ENCODE measurements at regions of chr4 and their contacts with region 1.

Region 1: DNA sequence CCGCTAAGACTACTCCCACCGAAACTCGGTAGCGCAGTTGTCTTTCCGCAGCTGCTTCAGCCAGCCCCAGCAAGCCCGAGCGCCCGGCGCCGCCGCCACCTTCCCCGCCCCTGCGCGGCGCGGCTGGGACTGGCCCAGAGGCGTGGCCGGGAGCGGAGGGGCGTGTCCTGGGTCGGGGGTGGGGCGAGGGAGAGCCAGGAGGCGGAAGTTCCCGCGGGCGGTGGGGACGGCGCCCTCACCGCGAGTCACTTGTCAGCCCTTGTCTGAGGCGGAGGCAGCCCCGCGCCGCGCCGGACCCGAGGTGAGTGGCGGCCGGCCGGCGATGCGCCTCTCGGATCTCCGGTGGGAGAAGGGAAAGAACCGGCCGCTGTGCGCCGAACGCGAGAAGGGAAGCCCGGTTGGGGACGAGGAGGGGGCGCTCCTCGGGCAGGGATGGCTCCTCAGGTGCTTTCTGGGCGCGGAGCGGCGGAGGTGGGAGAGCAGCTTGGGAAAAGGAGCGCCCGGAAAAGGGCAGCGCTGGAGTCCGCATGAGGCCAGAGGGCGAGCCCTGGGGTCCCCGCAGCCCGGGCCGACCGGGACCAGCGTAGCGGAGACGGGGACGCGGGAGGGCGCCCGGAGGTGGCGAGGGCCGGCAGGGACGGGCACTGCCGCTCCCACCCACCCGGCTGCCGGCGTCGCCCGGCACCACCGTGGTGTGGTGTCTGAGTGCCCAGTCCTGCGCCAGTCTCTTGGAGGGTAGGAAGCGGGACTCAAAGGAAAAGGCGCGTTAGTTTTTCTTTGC is at the start of gene PDLIM5:
- DNase-seq: peak; percentile 89 to 91 (median 90)
- H3K4me3 ChIP-seq: peak within 1 kb of the TSS; percentile 92
- H3K27ac ChIP-seq: peak within 1 kb of the TSS; percentile 92 to 95
- H3K4me1 ChIP-seq: no peaks in the 10 kb centered on the region
- H3K27me3 ChIP-seq: no peaks in the 10 kb centered on the region
- CTCF ChIP-seq: peak in 2 of 3 donors; percentile 10 to 16
- EP300 ChIP-seq: no peak
- POLR2A ChIP-seq: peak; percentile 95
- total RNA-seq, gene PDLIM5: 67.2 to 160 (median 87.8) TPM

Region 2: GRCh38 chr4:94399721-94400120 is 52.2 kb before region 1 on chr4:
- intact Hi-C with region 1: no loop called
- DNase-seq: no peak
- H3K4me3 ChIP-seq: no peak overlapping the region
- H3K27ac ChIP-seq: no peak overlapping the region
- H3K4me1 ChIP-seq: no peaks in the 10 kb centered on the region
- H3K27me3 ChIP-seq: no peaks in the 10 kb centered on the region
- CTCF ChIP-seq: no peak
- EP300 ChIP-seq: no peak
- POLR2A ChIP-seq: no peak

Region 3: DNA sequence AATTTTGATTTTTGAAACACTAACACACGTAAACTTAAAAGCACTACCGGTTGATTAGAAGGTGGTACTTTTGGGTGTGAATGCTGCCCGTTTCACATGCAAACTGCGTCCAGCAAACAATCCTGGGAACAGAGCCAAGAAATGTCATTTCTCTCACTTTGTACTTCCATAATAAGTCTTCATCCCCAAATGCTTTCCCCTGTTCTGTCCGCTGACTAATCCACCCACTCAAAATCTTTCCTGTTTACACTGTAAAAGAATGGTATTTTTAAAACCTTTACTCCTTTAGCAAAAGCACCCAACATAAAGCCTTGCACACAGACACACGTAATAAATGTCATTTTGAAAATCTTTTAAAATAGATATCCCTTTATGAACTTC is 39.2 kb before region 1 on chr4:
- intact Hi-C with region 1: loop called in 1 of 4 experiments (anchors 5 kb)
- DNase-seq: peak in 2 of 5 donors; percentile 12 to 16
- H3K4me3 ChIP-seq: peak overlapping the region; percentile 10
- H3K27ac ChIP-seq: peak overlapping the region in 1 of 2 donors; percentile 23
- H3K4me1 ChIP-seq: peaks cover 3% of the 10 kb centered on the region
- H3K27me3 ChIP-seq: no peaks in the 10 kb centered on the region
- CTCF ChIP-seq: no peak
- EP300 ChIP-seq: no peak
- POLR2A ChIP-seq: no peak

Region 4: DNA sequence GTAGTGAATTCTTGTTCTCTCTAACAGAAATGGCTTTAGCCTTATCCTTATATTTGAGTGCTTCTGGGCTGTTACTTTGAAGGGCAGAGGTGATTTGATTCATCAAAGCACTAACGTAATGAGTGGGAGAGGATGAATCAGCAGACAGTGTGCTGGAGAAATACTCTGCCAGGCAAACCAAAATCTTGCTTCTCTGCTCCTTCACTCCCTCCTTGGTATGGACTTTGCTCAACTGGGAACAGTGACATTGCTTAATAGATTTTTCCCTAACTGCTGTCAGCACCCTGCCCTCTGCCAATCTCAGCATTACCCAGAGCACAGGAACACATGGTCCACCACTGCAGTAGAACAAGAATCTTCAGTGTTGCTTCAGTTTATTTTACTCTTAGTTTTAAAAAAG is 55.8 kb after region 1 on chr4:
- intact Hi-C with region 1: loop called in 1 of 4 experiments (anchors 10 kb)
- DNase-seq: peak in 2 of 5 donors; percentile 13 to 35
- H3K4me3 ChIP-seq: no peak overlapping the region
- H3K27ac ChIP-seq: no peak overlapping the region
- H3K4me1 ChIP-seq: peaks cover 5% of the 10 kb centered on the region
- H3K27me3 ChIP-seq: no peaks in the 10 kb centered on the region
- CTCF ChIP-seq: no peak
- EP300 ChIP-seq: no peak
- POLR2A ChIP-seq: no peak

Region 5: DNA sequence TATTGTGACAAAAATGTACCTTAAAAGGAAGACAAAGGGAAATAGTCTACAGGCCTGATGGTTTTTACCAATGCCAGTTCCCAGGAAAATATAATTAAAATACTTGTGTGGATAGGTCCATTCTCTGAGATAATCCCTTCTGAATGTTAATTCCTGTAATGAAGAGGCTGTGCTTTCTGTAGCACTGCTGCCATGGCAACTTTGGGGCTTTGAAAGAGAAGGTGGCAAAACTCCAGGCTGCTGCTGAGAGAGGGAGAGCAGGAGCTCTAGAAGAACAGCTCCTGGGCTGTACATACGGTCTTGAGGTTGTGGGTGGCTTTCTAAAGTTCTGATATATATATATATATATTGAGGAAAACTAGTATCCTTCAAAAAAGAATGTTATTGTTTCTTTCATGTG is 125.3 kb after region 1 on chr4:
- intact Hi-C with region 1: no loop called
- DNase-seq: peak; percentile 22 to 70 (median 49)
- H3K4me3 ChIP-seq: no peak overlapping the region
- H3K27ac ChIP-seq: no peak overlapping the region
- H3K4me1 ChIP-seq: peaks cover 3% of the 10 kb centered on the region
- H3K27me3 ChIP-seq: no peaks in the 10 kb centered on the region
- CTCF ChIP-seq: no peak
- EP300 ChIP-seq: no peak
- POLR2A ChIP-seq: no peak